ENCODE measurements at regions of chr22 and their contacts with region 1.

Region 1: DNA sequence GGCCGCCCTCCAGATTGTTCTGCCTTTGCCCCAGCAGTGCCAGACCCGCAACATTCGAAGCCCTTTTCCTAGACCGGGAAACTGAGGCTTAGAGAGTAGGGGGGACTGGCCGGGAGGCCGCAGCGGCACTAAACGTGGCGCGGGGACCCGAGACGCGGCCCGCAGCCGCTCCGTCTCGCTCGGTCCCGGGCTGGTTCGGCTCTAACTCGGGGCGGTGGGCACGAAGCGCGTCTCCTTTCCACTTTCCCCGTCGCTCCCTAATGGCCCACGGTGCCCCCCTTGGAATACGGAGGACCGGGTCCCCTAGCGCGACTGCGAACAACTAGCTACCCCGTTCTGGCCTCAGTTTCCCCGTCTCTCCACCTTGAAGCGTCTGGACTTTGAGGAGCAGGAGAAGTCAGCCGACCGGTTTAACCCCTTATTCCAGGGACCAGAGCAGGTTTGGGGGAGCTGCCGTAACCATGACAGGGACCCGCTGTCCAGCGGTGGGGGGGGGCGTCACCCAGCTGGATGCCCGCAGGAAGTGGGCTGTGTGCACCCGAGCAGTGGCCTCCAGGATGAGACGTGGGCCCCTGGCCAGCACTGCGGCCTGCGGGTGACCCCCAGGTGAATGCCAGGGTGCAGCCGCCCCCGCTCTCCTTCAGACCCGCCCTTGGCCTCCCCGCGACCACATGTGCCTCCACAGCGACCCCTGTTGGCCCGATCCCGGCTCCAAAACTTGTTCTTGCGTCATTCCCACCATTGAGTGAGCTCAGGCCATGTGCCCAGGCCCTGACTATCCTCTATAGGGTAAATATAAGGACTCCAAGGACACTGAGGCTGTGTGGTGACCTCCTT is 1.1 kb downstream of the CDC42EP1 start:
- DNase-seq: peak; percentile 28 to 83 (median 66)
- ATAC-seq: peak; percentile 83
- H3K4me3 ChIP-seq: no peak overlapping the region
- H3K4me3 Mint-ChIP-seq: peak overlapping the region; percentile 48 to 87 (median 78)
- H3K27ac ChIP-seq: no peak overlapping the region
- H3K27ac Mint-ChIP-seq: peak overlapping the region in 1 of 9 donors; percentile 78
- H3K4me1 ChIP-seq: peaks cover 21 to 22% of the 10 kb centered on the region in 2 donors
- H3K4me1 Mint-ChIP-seq: peaks cover 12 to 28% (median 22%) of the 10 kb centered on the region in 7 donors
- H3K27me3 ChIP-seq: peaks cover 11 to 14% of the 10 kb centered on the region in 2 donors
- H3K27me3 Mint-ChIP-seq: peaks cover 25 to 70% (median 31%) of the 10 kb centered on the region in 5 donors

Region 2: GRCh38 chr22:37526376-37526775 is 35.1 kb before region 1 on chr22:
- CTCF ChIA-PET with region 1: no interaction called
- POLR2A ChIA-PET with region 1: no interaction called
- intact Hi-C with region 1: no loop called
- DNase-seq: no peak
- ATAC-seq: no peak
- H3K4me3 ChIP-seq: no peak overlapping the region
- H3K4me3 Mint-ChIP-seq: no peak overlapping the region
- H3K27ac ChIP-seq: no peak overlapping the region
- H3K27ac Mint-ChIP-seq: no peak overlapping the region
- H3K4me1 ChIP-seq: no peaks in the 10 kb centered on the region
- H3K4me1 Mint-ChIP-seq: peaks cover 8 to 10% (median 8%) of the 10 kb centered on the region in 7 donors
- H3K27me3 ChIP-seq: no peaks in the 10 kb centered on the region
- H3K27me3 Mint-ChIP-seq: peaks cover 12 to 35% (median 20%) of the 10 kb centered on the region in 5 donors

Region 3: GRCh38 chr22:37538590-37539357 is 22.7 kb before region 1 on chr22:
- CTCF ChIA-PET with region 1: interaction called, 147 read pairs
- POLR2A ChIA-PET with region 1: interaction called, 26 read pairs
- intact Hi-C with region 1: loop called in 1 of 2 experiments (anchors 1 kb)
- DNase-seq: peak; percentile 78 to 90 (median 87)
- ATAC-seq: peak; percentile 99
- H3K4me3 ChIP-seq: no peak overlapping the region
- H3K4me3 Mint-ChIP-seq: peak overlapping the region; percentile 15 to 64 (median 48)
- H3K27ac ChIP-seq: no peak overlapping the region
- H3K27ac Mint-ChIP-seq: peak overlapping the region in 5 of 9 donors; percentile 1 to 37 (median 7)
- H3K4me1 ChIP-seq: peaks cover 8 to 14% of the 10 kb centered on the region in 2 donors
- H3K4me1 Mint-ChIP-seq: peaks cover 14 to 44% (median 17%) of the 10 kb centered on the region in 7 donors
- H3K27me3 ChIP-seq: peaks cover 0 to 4% of the 10 kb centered on the region in 2 donors
- H3K27me3 Mint-ChIP-seq: peaks cover 4 to 18% (median 12%) of the 10 kb centered on the region in 5 donors